Common myeloid progenitor, CD34-positive (primary cell): ENCODE measurements at regions of chr1 and their contacts with region 1.

Region 1: GRCh38 chr1:116919802-116920201 is 10.1 kb downstream of the PTGFRN start:
- DNase-seq: no peak
- H3K4me3 ChIP-seq: no peak overlapping the region
- H3K27ac ChIP-seq: no peak overlapping the region
- H3K4me1 ChIP-seq: no peaks in the 10 kb centered on the region
- H3K27me3 ChIP-seq: peaks cover 0 to 4% (median 0%) of the 10 kb centered on the region in 5 experiments

Region 2: GRCh38 chr1:116934586-116935207 is 14.9 kb after region 1 on chr1:
- CTCF ChIA-PET with region 1: interaction called, 10 read pairs
- POLR2A ChIA-PET with region 1: no interaction called
- DNase-seq: peak; percentile 8 to 63 (median 34)
- H3K4me3 ChIP-seq: no peak overlapping the region
- H3K27ac ChIP-seq: no peak overlapping the region
- H3K4me1 ChIP-seq: peaks cover 0 to 1% (median 0%) of the 10 kb centered on the region in 4 experiments
- H3K27me3 ChIP-seq: peaks cover 0 to 5% (median 0%) of the 10 kb centered on the region in 5 experiments